Mammary epithelial cell (primary cell): ENCODE measurements at regions of chr18 and their contacts with region 1.

Region 1: GRCh38 chr18:8177330-8178016 is 431.8 kb upstream of the RAB12 start:
- DNase-seq: peak; percentile 49
- H3K4me3 ChIP-seq: no peak overlapping the region
- H3K27ac ChIP-seq: no peak overlapping the region
- H3K4me1 ChIP-seq: peaks cover 18% of the 10 kb centered on the region
- H3K27me3 ChIP-seq: no peaks in the 10 kb centered on the region
- CTCF ChIP-seq: no peak

Region 2: DNA sequence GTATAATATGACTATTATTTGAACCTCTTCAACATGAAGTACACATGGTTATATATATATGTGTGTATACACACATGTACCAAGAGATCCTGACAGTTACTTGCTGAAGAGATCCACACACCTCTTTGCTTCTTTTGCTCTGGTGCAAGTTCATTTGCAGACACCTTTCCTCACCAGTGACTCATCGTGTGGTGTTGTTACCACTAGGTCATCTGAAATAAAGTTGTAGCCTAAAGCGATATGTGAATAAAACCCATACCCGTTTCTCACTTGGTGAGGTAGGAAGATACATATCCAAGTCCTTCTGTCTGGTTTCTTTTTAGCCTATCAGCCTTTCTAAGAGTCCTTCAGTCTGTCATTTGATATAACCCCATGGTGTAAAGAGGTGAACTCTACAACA is 52.3 kb after region 1 on chr18:
- CTCF ChIA-PET with region 1: no interaction called
- dilution Hi-C with region 1: no loop called
- in situ Hi-C with region 1: no loop called
- intact Hi-C with region 1: loop called (anchors 10 kb)
- DNase-seq: peak; percentile 59
- H3K4me3 ChIP-seq: no peak overlapping the region
- H3K27ac ChIP-seq: no peak overlapping the region
- H3K4me1 ChIP-seq: peaks cover 7% of the 10 kb centered on the region
- H3K27me3 ChIP-seq: no peaks in the 10 kb centered on the region
- CTCF ChIP-seq: no peak